ENCODE measurements at regions of chr1 and their contacts with region 1.

Region 1: GRCh38 chr1:202998836-202999750 is 8.1 kb upstream of the TMEM183A start:
- DNase-seq: peak; percentile 63
- H3K4me3 Mint-ChIP-seq: peak overlapping the region; percentile 33
- H3K27ac Mint-ChIP-seq: no peak overlapping the region
- H3K4me1 Mint-ChIP-seq: peaks cover 10% of the 10 kb centered on the region
- H3K27me3 Mint-ChIP-seq: peaks cover 22% of the 10 kb centered on the region

Region 2: GRCh38 chr1:202750758-202751157 is 248.3 kb before region 1 on chr1:
- CTCF ChIA-PET with region 1: interaction called, 13 read pairs
- POLR2A ChIA-PET with region 1: no interaction called
- intact Hi-C with region 1: loop called (anchors 2 kb)
- DNase-seq: no peak
- H3K4me3 Mint-ChIP-seq: no peak overlapping the region
- H3K27ac Mint-ChIP-seq: no peak overlapping the region
- H3K4me1 Mint-ChIP-seq: no peaks in the 10 kb centered on the region
- H3K27me3 Mint-ChIP-seq: no peaks in the 10 kb centered on the region

Region 3: GRCh38 chr1:202888531-202889360 is 110.3 kb before region 1 on chr1 and contains the start of gene RABIF:
- CTCF ChIA-PET with region 1: interaction called, 5 read pairs
- POLR2A ChIA-PET with region 1: no interaction called
- intact Hi-C with region 1: loop called (anchors 2 kb)
- DNase-seq: peak; percentile 98
- H3K4me3 Mint-ChIP-seq: peak within 1 kb of the TSS; percentile 93
- H3K27ac Mint-ChIP-seq: peak within 1 kb of the TSS; percentile 98
- H3K4me1 Mint-ChIP-seq: peaks cover 22% of the 10 kb centered on the region
- H3K27me3 Mint-ChIP-seq: no peaks in the 10 kb centered on the region
- total RNA-seq, gene RABIF: 9.6 to 10.1 TPM

Region 4: DNA sequence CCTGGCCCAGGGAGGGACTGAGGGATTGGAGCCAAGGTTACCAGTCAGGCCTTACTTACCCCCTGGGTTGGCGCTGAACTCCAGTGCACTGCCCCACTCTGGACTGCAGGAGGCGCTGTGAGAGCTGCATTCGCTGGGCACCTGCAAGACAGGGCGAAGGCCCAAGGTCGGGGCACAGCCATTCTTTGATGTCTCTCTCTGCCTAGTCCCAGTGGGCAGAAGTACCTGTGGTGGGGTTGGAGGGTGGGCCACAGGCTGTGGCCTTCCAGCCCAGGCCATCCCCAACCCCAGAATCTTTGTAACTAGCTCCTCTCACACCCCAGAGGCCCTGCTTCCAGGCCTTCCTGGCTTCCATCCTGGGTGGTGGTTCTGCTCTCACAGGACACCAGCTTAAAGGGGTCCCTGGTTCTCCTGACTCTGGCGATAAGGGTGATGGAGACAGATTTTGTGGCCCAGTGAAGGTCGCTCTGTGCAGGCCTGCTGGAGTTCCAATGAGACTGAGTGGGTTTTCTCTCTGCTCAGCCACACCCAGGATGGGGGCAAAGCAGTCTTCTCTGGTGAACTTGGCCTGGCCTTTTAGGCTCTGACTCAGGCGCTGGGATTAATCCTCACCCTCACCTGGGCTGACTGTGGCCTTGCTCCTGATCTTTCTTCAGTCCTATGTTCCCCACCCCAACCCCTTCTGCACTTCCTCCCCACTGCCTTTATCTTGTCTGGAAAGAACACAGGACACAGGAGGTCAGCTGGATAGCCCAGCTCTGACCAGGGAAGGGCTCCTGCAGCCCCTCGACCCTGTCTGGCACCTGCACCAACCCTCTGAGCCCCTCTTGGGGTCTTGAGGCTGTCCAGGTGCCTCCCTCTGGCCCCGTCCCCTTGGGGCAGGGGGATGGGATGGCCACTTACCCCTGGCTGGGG is 85.8 kb after region 1 on chr1:
- CTCF ChIA-PET with region 1: no interaction called
- POLR2A ChIA-PET with region 1: no interaction called
- intact Hi-C with region 1: no loop called
- DNase-seq: peak; percentile 56
- H3K4me3 Mint-ChIP-seq: no peak overlapping the region
- H3K27ac Mint-ChIP-seq: no peak overlapping the region
- H3K4me1 Mint-ChIP-seq: no peaks in the 10 kb centered on the region
- H3K27me3 Mint-ChIP-seq: peaks cover 13% of the 10 kb centered on the region

Measured in activated CD4-positive, alpha-beta memory T cell treated with anti-CD3 and anti-CD28 coated beads for 36 hours (primary cell).